Posterior vena cava (tissue), 2 donors: ENCODE measurements at regions of chr12 and their contacts with region 1.

Region 1: DNA sequence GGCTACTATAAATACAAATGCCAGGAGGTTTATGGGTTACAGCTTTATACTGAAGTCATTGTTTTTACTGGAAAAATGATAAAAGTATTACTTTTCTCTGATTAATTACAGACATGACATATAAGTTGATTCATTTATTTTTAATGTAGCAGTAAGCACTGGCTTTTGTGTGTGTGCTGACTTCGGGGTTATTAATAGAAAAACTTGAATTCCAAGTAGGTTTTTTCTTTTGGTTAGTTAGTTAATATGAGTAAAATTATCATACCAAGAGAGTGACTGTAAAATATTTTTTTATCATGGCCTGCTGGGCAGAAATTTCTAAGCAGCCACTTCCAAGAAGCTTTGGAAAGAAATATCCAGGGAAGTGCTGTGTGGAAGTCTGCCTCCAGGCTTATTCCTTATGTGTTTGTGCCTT is 56.4 kb downstream of the IFT81 start:
- DNase-seq: no peak

Region 2: GRCh38 chr12:110048242-110049027 is 132.2 kb before region 1 on chr12 and contains the start of gene C12orf76:
- intact Hi-C with region 1: no loop called
- DNase-seq: peak; percentile 98
- total RNA-seq, gene C12orf76: 6.7 to 9.2 TPM

Region 3: DNA sequence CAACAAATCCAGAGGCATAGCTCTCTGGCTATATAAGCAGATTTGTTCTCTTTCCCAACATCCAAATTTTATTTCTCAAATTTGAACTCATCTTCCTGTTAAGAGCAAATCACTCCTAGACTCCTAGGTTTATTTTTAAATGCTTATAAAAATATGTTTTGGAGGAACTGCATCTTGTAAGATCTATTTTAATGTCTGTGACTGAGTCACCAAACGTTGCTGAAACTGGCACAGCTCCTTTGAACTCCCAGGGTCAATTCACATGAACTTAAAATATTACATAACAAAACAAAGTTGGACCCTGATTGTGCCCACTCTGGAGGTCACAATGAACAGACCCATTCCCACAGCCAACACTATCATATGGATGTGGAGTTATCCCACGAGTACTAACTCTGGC is 199.0 kb after region 1 on chr12:
- intact Hi-C with region 1: loop called in 1 of 2 experiments (anchors 5 kb)
- DNase-seq: no peak

Region 4: DNA sequence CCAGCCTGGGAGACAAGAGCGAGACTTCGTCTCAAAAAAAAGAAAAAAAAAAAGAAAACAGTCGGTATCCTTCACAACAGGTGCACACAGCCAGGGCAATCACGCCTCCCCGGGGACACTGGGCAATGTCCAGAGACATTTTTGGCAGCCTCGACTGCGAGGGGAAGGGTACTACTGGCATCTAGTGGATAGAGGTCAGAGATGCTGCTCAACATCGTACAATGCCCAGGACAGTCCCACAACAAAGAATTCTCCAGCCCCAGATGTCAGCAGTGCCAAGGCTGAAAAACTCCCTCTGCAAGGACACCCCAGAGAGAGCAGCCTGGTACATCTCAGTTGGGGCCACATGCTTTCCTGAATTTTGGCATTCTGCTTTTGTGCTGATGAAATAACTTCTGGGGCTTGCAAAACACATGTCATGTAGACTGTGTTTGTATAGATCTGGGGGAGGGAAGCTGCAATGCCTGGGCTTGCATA is 1607.6 kb after region 1 on chr12:
- intact Hi-C with region 1: no loop called
- DNase-seq: no peak